Activated CD8-positive, alpha-beta T cell treated with anti-CD3 and anti-CD28 coated beads for 36 hours (primary cell): ENCODE measurements at regions of chr10 and their contacts with region 1.

Region 1: DNA sequence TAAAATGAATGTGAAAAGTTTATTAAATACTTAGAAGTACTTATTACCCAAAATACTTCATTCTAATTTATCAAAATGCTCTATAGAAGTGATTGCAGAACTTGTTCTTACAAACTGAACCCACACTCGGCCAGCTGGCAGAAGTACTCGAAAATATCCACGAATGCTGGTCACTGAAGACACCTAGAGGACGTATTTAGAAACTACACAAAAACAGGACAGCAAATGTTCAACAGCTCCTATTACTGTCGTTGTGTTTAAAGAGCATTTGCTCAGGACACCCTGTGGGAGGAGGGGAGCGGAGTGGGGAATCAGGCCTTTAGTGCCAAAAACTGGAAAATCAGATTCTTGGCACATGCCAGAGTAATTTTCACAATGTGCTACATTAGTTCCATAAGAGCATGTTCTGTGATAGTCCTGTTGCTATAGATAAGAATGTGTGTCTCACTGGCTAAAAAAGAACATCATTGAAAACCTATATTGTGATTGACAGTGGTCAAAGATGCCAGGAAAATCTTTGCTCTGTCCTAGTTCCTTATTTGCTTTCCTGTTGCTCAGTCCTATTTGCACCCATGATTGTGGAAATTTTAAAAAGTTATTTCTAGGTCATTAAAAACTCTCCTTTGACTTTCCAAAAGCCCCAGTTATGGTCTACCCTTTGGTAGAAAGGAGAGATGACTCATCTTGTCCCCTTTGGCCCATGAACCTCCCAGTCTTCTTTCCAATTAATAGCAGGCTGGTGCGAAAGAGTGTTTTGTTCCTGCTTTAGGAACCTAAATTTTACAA is 49.0 kb upstream of the NRBF2 start:
- DNase-seq: peak; percentile 61
- ATAC-seq: peak; percentile 75
- H3K4me3 Mint-ChIP-seq: no peak overlapping the region
- H3K27ac Mint-ChIP-seq: no peak overlapping the region
- H3K4me1 Mint-ChIP-seq: no peaks in the 10 kb centered on the region
- H3K27me3 Mint-ChIP-seq: peaks cover 16% of the 10 kb centered on the region
- CTCF ChIP-seq: peak; percentile 75

Region 2: DNA sequence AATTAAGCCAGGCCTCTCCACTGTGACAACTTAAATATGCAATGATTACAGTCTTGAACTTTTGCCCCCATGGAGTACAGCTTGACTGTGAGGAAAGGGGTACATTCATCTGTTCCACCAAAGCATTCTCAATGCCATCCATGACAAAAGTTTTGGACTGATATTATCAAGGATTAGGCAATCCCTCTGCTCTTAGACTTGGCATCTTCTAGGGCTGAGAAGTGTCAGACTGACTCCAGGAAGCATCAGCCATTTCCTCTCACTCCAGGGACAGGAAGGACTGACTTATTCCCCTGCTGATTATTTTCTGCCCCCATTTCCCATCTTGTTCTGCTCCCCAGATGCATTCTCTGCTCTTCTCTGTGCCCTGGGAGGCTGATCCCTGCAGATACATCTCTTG is 640.2 kb before region 1 on chr10:
- CTCF ChIA-PET with region 1: interaction called, 17 read pairs
- POLR2A ChIA-PET with region 1: no interaction called
- intact Hi-C with region 1: loop called (anchors 10 kb)
- DNase-seq: no peak
- ATAC-seq: no peak
- H3K4me3 Mint-ChIP-seq: no peak overlapping the region
- H3K27ac Mint-ChIP-seq: no peak overlapping the region
- H3K4me1 Mint-ChIP-seq: no peaks in the 10 kb centered on the region
- H3K27me3 Mint-ChIP-seq: peaks cover 10% of the 10 kb centered on the region
- CTCF ChIP-seq: no peak